ENCODE measurements at regions of chrX and their contacts with region 1.

Region 1: GRCh38 chrX:41441934-41442823 is 5.0 kb upstream of the NYX start:
- DNase-seq: peak; percentile 79 to 96 (median 87)
- ATAC-seq: peak; percentile 99
- H3K4me3 ChIP-seq: peak overlapping the region; percentile 60
- H3K4me3 Mint-ChIP-seq: peak overlapping the region; percentile 45 to 76 (median 68)
- H3K27ac ChIP-seq: no peak overlapping the region
- H3K27ac Mint-ChIP-seq: peak overlapping the region in 6 of 9 donors; percentile 28 to 89 (median 53)
- H3K4me1 ChIP-seq: no peaks in the 10 kb centered on the region
- H3K4me1 Mint-ChIP-seq: peaks cover 0 to 20% (median 5%) of the 10 kb centered on the region in 7 donors
- H3K27me3 ChIP-seq: no peaks in the 10 kb centered on the region
- H3K27me3 Mint-ChIP-seq: no peaks in the 10 kb centered on the region

Region 2: DNA sequence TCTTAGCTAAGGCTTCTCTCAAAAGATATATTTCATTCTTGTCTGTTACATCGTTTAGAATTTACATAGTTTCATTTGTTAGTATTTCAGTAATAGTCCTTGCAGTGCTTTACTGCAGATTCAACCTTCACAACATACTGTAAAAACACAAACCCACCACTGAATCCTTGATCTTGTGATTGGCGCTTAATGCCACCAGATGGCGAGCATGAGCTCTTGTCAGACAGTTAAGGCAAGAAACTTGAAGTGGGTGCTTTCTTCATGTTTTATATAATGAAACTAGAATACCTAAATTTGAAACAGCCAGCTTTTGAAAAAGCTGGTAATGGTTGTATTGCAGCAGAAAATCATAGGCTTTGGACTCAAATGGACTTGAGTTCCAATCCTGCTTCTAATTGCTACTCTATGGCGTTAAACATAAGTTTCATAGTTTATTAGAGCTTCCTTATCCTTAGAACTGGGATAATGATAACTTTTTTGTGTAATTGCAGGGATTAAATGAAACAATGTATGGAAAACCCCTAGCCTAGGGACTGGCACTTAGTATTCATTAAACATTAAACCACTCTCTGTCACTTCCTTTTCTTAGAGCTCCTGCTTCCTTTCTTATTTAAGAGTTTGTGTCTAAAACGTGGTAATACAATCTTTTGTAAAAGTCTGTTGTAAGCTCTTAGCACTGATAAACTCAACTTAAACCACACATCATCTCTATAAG is 261.8 kb before region 1 on chrX:
- CTCF ChIA-PET with region 1: no interaction called
- POLR2A ChIA-PET with region 1: no interaction called
- intact Hi-C with region 1: loop called in 1 of 2 experiments (anchors 2 kb)
- DNase-seq: peak in 8 of 9 donors; percentile 22 to 64 (median 46)
- ATAC-seq: peak; percentile 80
- H3K4me3 ChIP-seq: no peak overlapping the region
- H3K4me3 Mint-ChIP-seq: peak overlapping the region in 3 of 10 donors; percentile 19 to 58 (median 42)
- H3K27ac ChIP-seq: no peak overlapping the region
- H3K27ac Mint-ChIP-seq: peak overlapping the region in 7 of 9 donors; percentile 42 to 62 (median 56)
- H3K4me1 ChIP-seq: peaks cover 0 to 10% of the 10 kb centered on the region in 2 donors
- H3K4me1 Mint-ChIP-seq: peaks cover 23 to 63% (median 51%) of the 10 kb centered on the region in 7 donors
- H3K27me3 ChIP-seq: no peaks in the 10 kb centered on the region
- H3K27me3 Mint-ChIP-seq: no peaks in the 10 kb centered on the region

Region 3: DNA sequence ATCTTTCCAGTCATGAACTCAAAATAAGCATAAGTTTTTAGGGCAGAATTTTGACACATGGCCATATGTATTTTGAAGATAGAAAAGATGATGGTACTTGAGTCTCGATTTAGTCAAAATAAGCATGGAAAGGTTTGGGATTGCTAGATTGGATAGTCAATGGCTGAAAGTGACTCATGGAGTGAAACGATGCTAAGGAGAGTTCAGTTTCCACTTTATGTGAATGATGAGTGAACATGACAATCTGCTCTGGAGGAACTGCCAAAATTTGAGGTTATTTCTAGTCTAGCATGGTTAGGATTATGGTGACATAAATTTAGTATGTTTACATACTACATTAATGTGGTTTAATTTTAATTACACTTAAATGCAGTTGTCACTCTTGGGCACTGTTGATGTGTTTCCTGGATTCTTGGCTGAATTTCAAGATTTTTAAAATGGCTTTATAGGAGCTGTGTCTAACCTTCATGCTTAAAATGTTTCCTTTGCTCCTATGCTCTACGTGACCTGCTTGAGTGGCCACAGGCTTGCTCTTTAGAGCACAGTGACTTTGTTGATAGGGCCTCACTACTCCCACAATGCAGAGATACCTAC is 91.1 kb before region 1 on chrX:
- CTCF ChIA-PET with region 1: interaction called, 4 read pairs
- POLR2A ChIA-PET with region 1: no interaction called
- intact Hi-C with region 1: loop called (anchors 1 to 5 kb)
- DNase-seq: no peak
- ATAC-seq: peak; percentile 45
- H3K4me3 ChIP-seq: no peak overlapping the region
- H3K4me3 Mint-ChIP-seq: peak overlapping the region in 3 of 10 donors; percentile 2 to 11 (median 8)
- H3K27ac ChIP-seq: no peak overlapping the region
- H3K27ac Mint-ChIP-seq: peak overlapping the region in 8 of 9 donors; percentile 44 to 93 (median 74)
- H3K4me1 ChIP-seq: peaks cover 0 to 11% of the 10 kb centered on the region in 2 donors
- H3K4me1 Mint-ChIP-seq: peaks cover 5 to 56% (median 37%) of the 10 kb centered on the region in 7 donors
- H3K27me3 ChIP-seq: no peaks in the 10 kb centered on the region
- H3K27me3 Mint-ChIP-seq: no peaks in the 10 kb centered on the region

Region 4: DNA sequence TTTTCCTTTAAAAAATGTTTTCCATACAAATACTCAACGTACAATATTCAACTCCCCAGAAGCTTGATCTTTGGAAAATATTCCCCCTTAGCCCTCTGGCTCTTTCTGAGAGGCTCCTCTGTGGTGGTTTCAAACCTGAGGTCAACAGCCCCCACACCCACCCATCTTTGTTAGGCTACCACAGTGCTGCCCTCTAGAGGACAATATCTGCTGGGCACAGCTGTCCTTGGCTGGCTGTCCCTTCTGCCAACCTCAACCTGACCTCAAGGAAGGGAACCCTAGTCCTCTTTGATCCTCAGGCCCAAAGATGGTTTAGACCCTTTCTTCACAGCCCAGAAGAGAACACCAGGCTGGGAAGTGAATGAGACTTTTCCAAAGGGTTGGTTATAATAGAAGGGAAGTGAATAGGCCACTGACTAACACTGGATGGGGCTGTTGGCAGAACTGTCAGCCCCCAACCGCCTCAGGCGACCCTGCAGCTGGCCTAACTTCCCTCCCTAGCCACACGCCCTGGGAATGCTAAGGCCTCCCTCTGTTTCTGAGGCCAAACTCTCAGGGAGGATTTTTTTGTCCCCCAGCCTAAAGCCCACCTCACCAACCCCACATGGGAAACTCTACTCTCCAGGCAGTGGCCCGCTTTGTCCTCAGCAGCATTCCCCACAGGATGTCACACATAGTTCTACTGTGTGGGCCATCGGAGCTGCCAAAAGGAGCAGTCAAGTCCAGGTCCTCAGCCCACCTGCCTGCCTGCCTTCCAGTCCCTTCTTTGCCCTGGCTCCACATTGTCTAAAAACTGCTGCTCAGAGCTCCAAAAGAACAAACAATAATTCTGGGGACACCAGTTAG is 39.3 kb after region 1 on chrX:
- CTCF ChIA-PET with region 1: no interaction called
- POLR2A ChIA-PET with region 1: no interaction called
- intact Hi-C with region 1: loop called in 1 of 2 experiments (anchors 2 kb)
- DNase-seq: no peak
- ATAC-seq: no peak
- H3K4me3 ChIP-seq: no peak overlapping the region
- H3K4me3 Mint-ChIP-seq: no peak overlapping the region
- H3K27ac ChIP-seq: no peak overlapping the region
- H3K27ac Mint-ChIP-seq: no peak overlapping the region
- H3K4me1 ChIP-seq: no peaks in the 10 kb centered on the region
- H3K4me1 Mint-ChIP-seq: no peaks in the 10 kb centered on the region
- H3K27me3 ChIP-seq: no peaks in the 10 kb centered on the region
- H3K27me3 Mint-ChIP-seq: no peaks in the 10 kb centered on the region

Region 5: DNA sequence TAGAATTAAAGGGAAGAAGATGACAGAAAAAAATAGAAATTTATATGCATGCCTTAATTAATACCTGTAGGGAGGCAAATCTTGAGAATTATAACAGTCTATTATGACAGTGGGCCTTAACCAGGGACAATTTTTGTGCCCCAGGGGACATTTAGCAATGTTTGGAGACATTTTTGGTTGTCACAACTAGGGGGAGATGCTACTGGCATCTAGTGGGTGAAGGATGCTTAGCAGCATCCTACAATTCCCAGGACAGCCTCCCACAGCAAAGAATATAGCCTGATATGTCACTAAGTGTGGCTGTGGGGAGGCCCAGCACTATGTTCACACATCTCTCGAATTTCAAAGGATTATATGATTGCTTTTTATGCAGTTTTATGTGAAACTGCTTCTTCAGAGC is 292.4 kb after region 1 on chrX:
- CTCF ChIA-PET with region 1: no interaction called
- POLR2A ChIA-PET with region 1: no interaction called
- intact Hi-C with region 1: loop called in 1 of 2 experiments (anchors 10 kb)
- DNase-seq: no peak
- ATAC-seq: no peak
- H3K4me3 ChIP-seq: no peak overlapping the region
- H3K4me3 Mint-ChIP-seq: peak overlapping the region in 1 of 10 donors; percentile 72
- H3K27ac ChIP-seq: no peak overlapping the region
- H3K27ac Mint-ChIP-seq: peak overlapping the region in 1 of 9 donors; percentile 75
- H3K4me1 ChIP-seq: no peaks in the 10 kb centered on the region
- H3K4me1 Mint-ChIP-seq: peaks cover 0 to 28% (median 7%) of the 10 kb centered on the region in 7 donors
- H3K27me3 ChIP-seq: no peaks in the 10 kb centered on the region
- H3K27me3 Mint-ChIP-seq: no peaks in the 10 kb centered on the region

Measured in naive thymus-derived CD4-positive, alpha-beta T cell (primary cell).